ENCODE measurements at regions of chr17 and their contacts with region 1.

Region 1: GRCh38 chr17:76353599-76354316 is at the start of gene PRPSAP1:
- DNase-seq: peak; percentile 96
- ATAC-seq: peak; percentile 93
- H3K4me3 ChIP-seq: peak within 1 kb of the TSS; percentile 53 to 88 (median 68)
- H3K4me3 Mint-ChIP-seq: peak within 1 kb of the TSS; percentile 99
- H3K27ac ChIP-seq: peak within 1 kb of the TSS; percentile 84 to 94
- H3K27ac Mint-ChIP-seq: peak within 1 kb of the TSS; percentile 99
- H3K4me1 ChIP-seq: peaks cover 7 to 16% of the 10 kb centered on the region in 2 donors
- H3K4me1 Mint-ChIP-seq: peaks cover 27% of the 10 kb centered on the region
- H3K27me3 ChIP-seq: no peaks in the 10 kb centered on the region
- H3K27me3 Mint-ChIP-seq: no peaks in the 10 kb centered on the region
- CTCF ChIP-seq: peak; percentile 19
- total RNA-seq, gene PRPSAP1: 45.5 and 48.0 TPM in 2 replicates

Region 2: GRCh38 chr17:75667021-75667790 is 686.6 kb before region 1 on chr17 and contains the starts of genes RECQL5 and SAP30BP:
- CTCF ChIA-PET with region 1: no interaction called
- POLR2A ChIA-PET with region 1: no interaction called
- intact Hi-C with region 1: loop called (anchors 2 kb)
- DNase-seq: peak; percentile 99
- ATAC-seq: peak; percentile 85
- H3K4me3 ChIP-seq: peak within 1 kb of the TSS; percentile 84 to 99 (median 98)
- H3K4me3 Mint-ChIP-seq: peak within 1 kb of the TSS; percentile 50
- H3K27ac ChIP-seq: peak within 1 kb of the TSS; percentile 84 to 89
- H3K27ac Mint-ChIP-seq: peak within 1 kb of the TSS; percentile 78
- H3K4me1 ChIP-seq: peaks cover 40 to 46% of the 10 kb centered on the region in 2 donors
- H3K4me1 Mint-ChIP-seq: peaks cover 34% of the 10 kb centered on the region
- H3K27me3 ChIP-seq: no peaks in the 10 kb centered on the region
- H3K27me3 Mint-ChIP-seq: no peaks in the 10 kb centered on the region
- CTCF ChIP-seq: no peak
- total RNA-seq, gene RECQL5: 56.6 and 58.5 TPM in 2 replicates
- total RNA-seq, gene SAP30BP: 148 and 174 TPM in 2 replicates

Region 3: DNA sequence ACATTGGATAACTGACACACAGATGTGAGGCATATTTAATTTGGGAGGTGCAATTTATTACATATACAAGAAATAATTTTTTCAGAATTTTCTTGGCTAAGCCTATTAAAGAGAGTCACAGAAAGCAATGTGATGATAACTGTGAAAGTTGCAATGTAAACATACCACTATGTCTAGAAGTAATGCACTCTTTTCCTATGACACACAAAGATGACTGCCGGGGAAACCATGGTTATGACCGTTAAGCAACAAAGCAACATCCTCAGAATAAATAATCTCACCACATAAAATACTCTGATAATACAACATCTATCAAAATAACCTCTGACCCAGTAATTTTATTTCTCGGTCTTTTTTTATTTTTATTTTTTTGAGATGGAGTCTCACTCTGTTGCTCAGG is 35.2 kb before region 1 on chr17:
- CTCF ChIA-PET with region 1: no interaction called
- POLR2A ChIA-PET with region 1: interaction called, 10 read pairs
- intact Hi-C with region 1: no loop called
- DNase-seq: no peak
- ATAC-seq: no peak
- H3K4me3 ChIP-seq: no peak overlapping the region
- H3K4me3 Mint-ChIP-seq: no peak overlapping the region
- H3K27ac ChIP-seq: no peak overlapping the region
- H3K27ac Mint-ChIP-seq: no peak overlapping the region
- H3K4me1 ChIP-seq: no peaks in the 10 kb centered on the region
- H3K4me1 Mint-ChIP-seq: no peaks in the 10 kb centered on the region
- H3K27me3 ChIP-seq: no peaks in the 10 kb centered on the region
- H3K27me3 Mint-ChIP-seq: no peaks in the 10 kb centered on the region
- CTCF ChIP-seq: no peak

Region 4: GRCh38 chr17:76501018-76501826 is 147.5 kb after region 1 on chr17 and contains the start of gene RHBDF2:
- CTCF ChIA-PET with region 1: interaction called, 4 read pairs
- POLR2A ChIA-PET with region 1: interaction called, 3 read pairs
- intact Hi-C with region 1: loop called (anchors 1 kb)
- DNase-seq: peak; percentile 95
- ATAC-seq: peak; percentile 85
- H3K4me3 ChIP-seq: peak within 1 kb of the TSS; percentile 46 to 97 (median 95)
- H3K4me3 Mint-ChIP-seq: peak within 1 kb of the TSS; percentile 97
- H3K27ac ChIP-seq: peak within 1 kb of the TSS; percentile 78 to 94
- H3K27ac Mint-ChIP-seq: peak within 1 kb of the TSS; percentile 99
- H3K4me1 ChIP-seq: peaks cover 38 to 63% of the 10 kb centered on the region in 2 donors
- H3K4me1 Mint-ChIP-seq: peaks cover 56% of the 10 kb centered on the region
- H3K27me3 ChIP-seq: no peaks in the 10 kb centered on the region
- H3K27me3 Mint-ChIP-seq: no peaks in the 10 kb centered on the region
- CTCF ChIP-seq: no peak
- total RNA-seq, gene RHBDF2: 482 and 509 TPM in 2 replicates

Region 5: DNA sequence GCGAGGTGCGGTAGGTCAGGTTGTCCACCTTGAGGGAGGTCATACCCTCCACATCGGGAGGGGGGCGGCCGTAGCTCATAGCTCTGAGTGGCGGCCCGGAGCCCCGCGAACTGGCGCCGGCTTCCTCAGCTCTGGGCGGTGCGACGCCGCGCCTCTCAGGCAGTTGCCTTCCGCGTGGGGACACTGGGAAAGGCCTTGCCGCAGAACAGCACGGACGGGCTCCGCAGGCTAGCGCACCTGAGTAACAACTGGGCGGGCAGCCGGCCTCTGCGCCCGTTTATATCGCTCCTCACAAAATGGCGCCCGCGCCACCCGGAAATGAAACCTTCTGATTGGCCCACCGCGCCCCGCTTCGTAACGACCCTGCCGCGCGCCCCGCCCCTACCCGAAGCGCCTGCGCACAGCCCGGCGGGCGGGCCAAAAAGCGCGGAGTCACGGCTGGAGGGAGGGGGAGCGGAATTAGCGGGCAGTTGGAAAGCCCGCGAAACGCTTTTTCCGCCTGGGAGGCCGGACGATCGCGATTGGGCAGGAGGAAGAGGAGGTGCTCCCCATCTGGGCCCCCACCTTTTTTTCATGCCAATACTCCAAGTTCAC is 383.4 kb after region 1 on chr17 and contains the start of gene SRSF2:
- CTCF ChIA-PET with region 1: no interaction called
- POLR2A ChIA-PET with region 1: interaction called, 11 read pairs
- intact Hi-C with region 1: no loop called
- DNase-seq: peak; percentile 99
- ATAC-seq: peak; percentile 76
- H3K4me3 ChIP-seq: peak within 1 kb of the TSS; percentile 95 to 99 (median 97)
- H3K4me3 Mint-ChIP-seq: peak within 1 kb of the TSS; percentile 97
- H3K27ac ChIP-seq: peak within 1 kb of the TSS; percentile 95 to 97
- H3K27ac Mint-ChIP-seq: peak within 1 kb of the TSS; percentile 99
- H3K4me1 ChIP-seq: peaks cover 35 to 36% of the 10 kb centered on the region in 2 donors
- H3K4me1 Mint-ChIP-seq: peaks cover 53% of the 10 kb centered on the region
- H3K27me3 ChIP-seq: no peaks in the 10 kb centered on the region
- H3K27me3 Mint-ChIP-seq: no peaks in the 10 kb centered on the region
- CTCF ChIP-seq: no peak
- total RNA-seq, gene SRSF2: 356 and 362 TPM in 2 replicates